ENCODE measurements at regions of chr10 and their contacts with region 1.

Region 1: DNA sequence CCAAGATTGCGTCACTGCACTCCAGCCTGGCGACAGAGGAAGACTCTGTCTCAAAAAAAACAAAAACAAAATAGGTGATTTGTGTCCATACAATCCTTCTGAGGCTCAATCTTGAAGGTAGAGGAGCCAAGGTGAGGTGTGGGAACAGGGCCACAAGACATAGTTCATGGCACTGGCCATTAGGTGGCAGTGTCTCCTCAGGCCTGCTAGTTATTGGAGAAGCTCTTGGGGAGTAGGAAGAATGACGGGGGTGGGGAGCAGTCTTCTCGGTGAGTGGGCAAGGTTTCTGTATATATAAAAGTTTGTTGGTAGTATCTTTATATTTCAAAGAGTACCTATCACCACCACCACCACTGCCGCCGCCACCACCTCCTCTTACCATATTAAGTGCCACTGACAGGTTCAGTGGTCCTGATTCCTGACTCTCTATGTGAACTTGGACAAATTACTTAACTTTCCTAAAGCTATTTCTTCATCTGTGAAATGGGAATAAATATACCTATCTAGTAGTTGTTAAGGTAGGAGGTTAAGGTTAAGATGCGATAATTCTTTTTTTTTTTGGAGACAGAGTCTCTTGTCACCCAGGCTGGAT is 24.0 kb downstream of the CCSER2 start:
- DNase-seq: peak; percentile 79
- ATAC-seq: peak; percentile 93
- H3K4me3 Mint-ChIP-seq: no peak overlapping the region
- H3K27ac Mint-ChIP-seq: no peak overlapping the region
- H3K4me1 Mint-ChIP-seq: peaks cover 54% of the 10 kb centered on the region
- H3K27me3 Mint-ChIP-seq: no peaks in the 10 kb centered on the region

Region 2: GRCh38 chr10:84333864-84334451 is 18.4 kb before region 1 on chr10:
- CTCF ChIA-PET with region 1: interaction called, 58 read pairs
- POLR2A ChIA-PET with region 1: interaction called, 5 read pairs
- DNase-seq: peak; percentile 79
- ATAC-seq: peak; percentile 81
- H3K4me3 Mint-ChIP-seq: peak overlapping the region; percentile 53
- H3K27ac Mint-ChIP-seq: peak overlapping the region; percentile 81
- H3K4me1 Mint-ChIP-seq: peaks cover 49% of the 10 kb centered on the region
- H3K27me3 Mint-ChIP-seq: no peaks in the 10 kb centered on the region

Region 3: DNA sequence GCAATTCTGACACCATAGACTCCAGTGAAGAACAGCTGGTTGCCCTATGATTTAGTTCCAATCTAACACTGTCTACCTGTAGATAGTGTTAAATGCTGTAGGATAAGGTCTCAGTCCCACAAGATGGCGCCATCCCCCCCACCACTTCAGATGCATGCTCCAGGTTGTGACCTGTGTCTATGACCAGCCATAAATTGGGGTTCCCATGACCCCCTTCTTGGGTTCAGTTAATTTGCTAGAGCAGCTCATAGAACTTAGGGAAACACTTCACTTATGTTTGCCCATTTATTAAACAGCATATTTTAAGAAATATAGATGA is 10.8 kb before region 1 on chr10:
- CTCF ChIA-PET with region 1: interaction called, 58 read pairs
- POLR2A ChIA-PET with region 1: interaction called, 3 read pairs
- DNase-seq: no peak
- ATAC-seq: peak; percentile 20
- H3K4me3 Mint-ChIP-seq: no peak overlapping the region
- H3K27ac Mint-ChIP-seq: peak overlapping the region; percentile 9
- H3K4me1 Mint-ChIP-seq: peaks cover 58% of the 10 kb centered on the region
- H3K27me3 Mint-ChIP-seq: no peaks in the 10 kb centered on the region

Region 4: GRCh38 chr10:84574102-84574501 is 221.8 kb after region 1 on chr10:
- CTCF ChIA-PET with region 1: no interaction called
- POLR2A ChIA-PET with region 1: no interaction called
- DNase-seq: no peak
- ATAC-seq: no peak
- H3K4me3 Mint-ChIP-seq: no peak overlapping the region
- H3K27ac Mint-ChIP-seq: no peak overlapping the region
- H3K4me1 Mint-ChIP-seq: no peaks in the 10 kb centered on the region
- H3K27me3 Mint-ChIP-seq: peaks cover 5% of the 10 kb centered on the region

Measured in activated CD8-positive, alpha-beta T cell treated with anti-CD3 and anti-CD28 coated beads, Interleukin-2, amount 10 ng/mL, durations not matched to agents 7 days and 5 days (primary cell).